Activated CD4-positive, alpha-beta T cell treated with anti-CD3 and anti-CD28 coated beads, Interleukin-2, amount 10 ng/mL, durations not matched to agents 7 days and 5 days (primary cell): ENCODE measurements at regions of chrX and their contacts with region 1.

Region 1: DNA sequence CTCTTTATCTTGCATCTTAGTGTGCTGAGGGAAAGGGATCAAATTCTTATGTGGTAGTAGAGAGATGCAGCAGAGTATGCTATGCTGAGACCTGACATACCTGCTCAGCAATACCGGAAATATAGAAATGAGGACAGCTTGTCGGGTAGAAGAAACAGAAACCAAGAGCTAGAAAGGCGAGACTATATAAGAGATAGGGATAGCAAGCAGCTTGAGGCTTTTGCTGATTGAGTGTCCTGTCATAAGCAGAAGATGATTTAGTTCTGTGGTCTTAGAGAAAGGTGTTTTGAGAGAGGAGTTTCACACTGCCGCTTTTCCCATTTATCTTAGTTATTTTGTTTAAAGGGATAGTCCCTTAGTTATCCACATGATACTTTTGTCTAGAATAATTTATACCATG is 31.7 kb downstream of the USP9X start:
- DNase-seq: peak; percentile 20
- H3K4me3 Mint-ChIP-seq: peak overlapping the region; percentile 66
- H3K27ac Mint-ChIP-seq: peak overlapping the region; percentile 92
- H3K4me1 Mint-ChIP-seq: peaks cover 68% of the 10 kb centered on the region
- H3K27me3 Mint-ChIP-seq: no peaks in the 10 kb centered on the region

Region 2: DNA sequence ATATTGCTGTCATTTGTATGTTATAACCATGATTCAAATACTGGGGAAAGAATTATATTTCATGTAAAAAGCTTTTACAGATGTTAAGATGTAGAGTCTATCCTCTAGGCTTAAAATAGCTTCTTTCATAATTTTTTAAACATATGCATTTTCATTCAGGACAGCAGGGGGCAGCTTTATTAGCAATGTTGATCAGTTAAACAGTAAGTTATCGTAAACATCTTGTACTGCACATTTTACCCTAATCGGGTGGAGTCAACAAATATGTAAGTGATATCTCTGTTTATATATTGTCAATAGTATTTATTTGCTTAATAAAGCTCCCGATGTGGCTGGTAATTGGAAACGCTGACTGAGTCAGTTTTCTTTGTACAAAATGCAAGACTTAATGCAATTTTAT is 239.1 kb before region 1 on chrX:
- CTCF ChIA-PET with region 1: interaction called, 10 read pairs
- POLR2A ChIA-PET with region 1: no interaction called
- DNase-seq: peak; percentile 35
- H3K4me3 Mint-ChIP-seq: no peak overlapping the region
- H3K27ac Mint-ChIP-seq: no peak overlapping the region
- H3K4me1 Mint-ChIP-seq: no peaks in the 10 kb centered on the region
- H3K27me3 Mint-ChIP-seq: no peaks in the 10 kb centered on the region

Region 3: DNA sequence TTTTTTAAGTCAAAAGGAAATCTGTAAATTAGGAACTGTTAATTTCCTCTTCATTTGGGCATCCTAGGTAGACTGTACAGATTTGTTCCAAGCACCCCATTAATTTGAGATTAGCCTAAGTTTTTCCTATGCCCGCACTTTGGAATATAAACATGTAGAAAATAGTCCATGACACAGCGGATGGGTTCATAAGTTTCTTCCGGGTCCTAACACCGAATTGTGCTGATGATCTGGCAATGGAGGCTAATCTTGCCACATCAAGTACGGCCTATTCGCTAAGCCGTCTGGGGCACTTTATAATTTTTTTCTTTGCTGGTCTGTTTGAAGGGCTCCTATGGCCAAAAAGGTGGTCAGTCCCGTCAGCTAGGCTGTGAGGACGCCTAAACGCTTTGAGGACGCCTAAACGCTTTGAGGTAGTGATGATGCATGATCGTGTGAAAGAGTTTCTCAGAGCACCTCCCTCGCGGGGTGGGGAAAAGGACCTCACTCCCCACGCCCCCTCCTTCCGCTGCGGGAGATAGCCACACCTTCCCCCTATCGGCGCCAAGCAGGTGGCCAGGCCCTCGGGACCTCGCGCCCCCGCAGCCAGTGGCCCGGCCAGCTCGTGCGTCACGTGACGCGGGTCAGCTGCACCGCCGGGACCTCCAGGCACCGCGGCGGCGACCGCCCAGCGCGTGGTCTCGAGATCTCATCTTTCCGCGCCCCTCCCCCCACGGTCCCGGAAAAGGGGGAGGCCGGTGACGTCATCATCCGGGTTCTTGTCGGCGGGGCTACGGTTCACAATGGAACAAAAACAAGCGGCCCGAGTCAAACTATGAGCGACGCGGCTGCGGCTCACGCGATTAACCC is 32.7 kb before region 1 on chrX:
- CTCF ChIA-PET with region 1: interaction called, 11 read pairs
- POLR2A ChIA-PET with region 1: interaction called, 3 read pairs
- DNase-seq: peak; percentile 94
- H3K4me3 Mint-ChIP-seq: peak overlapping the region; percentile 90
- H3K27ac Mint-ChIP-seq: peak overlapping the region; percentile 100
- H3K4me1 Mint-ChIP-seq: peaks cover 23% of the 10 kb centered on the region
- H3K27me3 Mint-ChIP-seq: peaks cover 1% of the 10 kb centered on the region